CD14-positive monocyte (primary cell): ENCODE measurements at regions of chr20 and their contacts with region 1.

Region 1: GRCh38 chr20:47886460-47887041 is 101.3 kb upstream of the SULF2 start:
- DNase-seq: no peak
- H3K4me3 ChIP-seq: no peak overlapping the region
- H3K4me3 Mint-ChIP-seq: no peak overlapping the region
- H3K27ac ChIP-seq: no peak overlapping the region
- H3K27ac Mint-ChIP-seq: no peak overlapping the region
- H3K4me1 ChIP-seq: no peaks in the 10 kb centered on the region
- H3K4me1 Mint-ChIP-seq: no peaks in the 10 kb centered on the region
- H3K27me3 ChIP-seq: no peaks in the 10 kb centered on the region
- H3K27me3 Mint-ChIP-seq: peaks cover 2% of the 10 kb centered on the region in 3 donors
- CTCF ChIP-seq: no peak

Region 2: DNA sequence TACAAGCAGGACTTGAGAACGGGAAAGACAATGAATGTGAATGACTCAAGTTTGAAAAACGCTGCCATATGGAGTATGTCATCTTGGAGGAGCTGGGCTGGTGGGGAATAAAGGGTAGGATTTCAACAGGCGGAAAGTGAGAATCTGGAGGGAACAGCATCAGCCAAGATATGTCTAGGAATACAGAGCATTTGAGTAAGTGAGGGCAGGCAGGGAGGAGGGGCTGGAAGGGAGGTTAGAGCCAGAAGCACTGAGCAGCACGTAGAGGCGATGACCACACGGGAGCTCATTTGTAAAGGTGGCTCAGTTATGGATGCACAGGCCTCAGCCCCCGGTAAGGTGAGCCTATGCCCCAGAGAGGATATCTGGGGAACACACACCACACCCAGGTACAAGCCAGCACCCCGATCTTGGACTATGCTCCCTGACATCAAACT is 645.2 kb before region 1 on chr20:
- intact Hi-C with region 1: no loop called
- DNase-seq: no peak
- H3K4me3 ChIP-seq: no peak overlapping the region
- H3K4me3 Mint-ChIP-seq: no peak overlapping the region
- H3K27ac ChIP-seq: no peak overlapping the region
- H3K27ac Mint-ChIP-seq: peak overlapping the region in 2 of 7 donors; percentile 3 to 9
- H3K4me1 ChIP-seq: no peaks in the 10 kb centered on the region
- H3K4me1 Mint-ChIP-seq: no peaks in the 10 kb centered on the region
- H3K27me3 ChIP-seq: no peaks in the 10 kb centered on the region
- H3K27me3 Mint-ChIP-seq: no peaks in the 10 kb centered on the region
- CTCF ChIP-seq: no peak

Region 3: GRCh38 chr20:47809913-47810622 is 76.5 kb before region 1 on chr20:
- intact Hi-C with region 1: loop called in 1 of 2 experiments (anchors 10 kb)
- DNase-seq: no peak
- H3K4me3 ChIP-seq: no peak overlapping the region
- H3K4me3 Mint-ChIP-seq: no peak overlapping the region
- H3K27ac ChIP-seq: no peak overlapping the region
- H3K27ac Mint-ChIP-seq: no peak overlapping the region
- H3K4me1 ChIP-seq: no peaks in the 10 kb centered on the region
- H3K4me1 Mint-ChIP-seq: no peaks in the 10 kb centered on the region
- H3K27me3 ChIP-seq: peaks cover 13 to 19% of the 10 kb centered on the region in 2 donors
- H3K27me3 Mint-ChIP-seq: peaks cover 29 to 57% (median 42%) of the 10 kb centered on the region in 3 donors
- CTCF ChIP-seq: no peak

Region 4: DNA sequence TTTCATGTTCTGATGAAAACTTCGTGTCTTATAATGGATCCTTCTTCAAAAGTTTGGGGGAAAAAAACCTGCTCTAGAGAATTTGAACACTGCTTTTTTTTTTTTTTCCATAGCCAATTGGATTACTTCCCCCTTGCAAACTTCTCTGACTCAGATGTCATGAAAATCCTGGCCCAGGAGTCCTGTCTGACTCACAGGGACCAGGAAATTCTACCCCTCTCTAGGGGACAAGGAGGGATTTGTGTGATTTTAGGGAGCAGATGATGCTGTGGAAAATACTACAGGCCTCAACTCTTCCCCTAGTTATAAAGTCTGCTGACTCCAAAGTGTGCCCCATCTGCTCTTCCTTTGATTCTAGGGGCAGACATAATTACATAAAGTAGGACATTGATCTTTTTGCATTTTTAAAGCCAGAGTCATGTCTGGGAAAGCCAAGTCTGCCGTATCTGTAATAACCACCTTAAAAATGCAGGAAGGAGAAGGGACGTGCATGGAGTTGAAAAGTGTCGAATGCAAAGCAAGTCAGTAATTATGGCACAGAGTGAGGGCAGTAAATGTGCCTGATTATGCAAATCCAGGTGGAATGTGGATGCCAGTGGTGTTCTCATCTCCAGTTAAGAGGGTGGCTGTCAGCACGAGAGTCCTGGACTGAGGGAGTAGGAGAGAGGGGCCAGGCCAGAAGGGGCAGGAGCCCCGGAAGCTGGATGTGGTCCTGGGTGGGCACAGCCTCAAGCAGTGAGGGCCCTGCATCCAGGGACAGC is 43.0 kb after region 1 on chr20:
- intact Hi-C with region 1: no loop called
- DNase-seq: no peak
- H3K4me3 ChIP-seq: no peak overlapping the region
- H3K4me3 Mint-ChIP-seq: no peak overlapping the region
- H3K27ac ChIP-seq: no peak overlapping the region
- H3K27ac Mint-ChIP-seq: no peak overlapping the region
- H3K4me1 ChIP-seq: no peaks in the 10 kb centered on the region
- H3K4me1 Mint-ChIP-seq: no peaks in the 10 kb centered on the region
- H3K27me3 ChIP-seq: peaks cover under 1 to 3% of the 10 kb centered on the region in 2 donors
- H3K27me3 Mint-ChIP-seq: peaks cover 4 to 20% (median 8%) of the 10 kb centered on the region in 3 donors
- CTCF ChIP-seq: no peak

Region 5: GRCh38 chr20:48523212-48523941 is 636.8 kb after region 1 on chr20:
- intact Hi-C with region 1: loop called in 1 of 2 experiments (anchors 5 kb)
- DNase-seq: no peak
- H3K4me3 ChIP-seq: no peak overlapping the region
- H3K4me3 Mint-ChIP-seq: no peak overlapping the region
- H3K27ac ChIP-seq: no peak overlapping the region
- H3K27ac Mint-ChIP-seq: no peak overlapping the region
- H3K4me1 ChIP-seq: no peaks in the 10 kb centered on the region
- H3K4me1 Mint-ChIP-seq: no peaks in the 10 kb centered on the region
- H3K27me3 ChIP-seq: no peaks in the 10 kb centered on the region
- H3K27me3 Mint-ChIP-seq: peaks cover 1 to 4% (median 2%) of the 10 kb centered on the region in 3 donors
- CTCF ChIP-seq: no peak